ENCODE measurements at regions of chr3 and their contacts with region 1.

Region 1: DNA sequence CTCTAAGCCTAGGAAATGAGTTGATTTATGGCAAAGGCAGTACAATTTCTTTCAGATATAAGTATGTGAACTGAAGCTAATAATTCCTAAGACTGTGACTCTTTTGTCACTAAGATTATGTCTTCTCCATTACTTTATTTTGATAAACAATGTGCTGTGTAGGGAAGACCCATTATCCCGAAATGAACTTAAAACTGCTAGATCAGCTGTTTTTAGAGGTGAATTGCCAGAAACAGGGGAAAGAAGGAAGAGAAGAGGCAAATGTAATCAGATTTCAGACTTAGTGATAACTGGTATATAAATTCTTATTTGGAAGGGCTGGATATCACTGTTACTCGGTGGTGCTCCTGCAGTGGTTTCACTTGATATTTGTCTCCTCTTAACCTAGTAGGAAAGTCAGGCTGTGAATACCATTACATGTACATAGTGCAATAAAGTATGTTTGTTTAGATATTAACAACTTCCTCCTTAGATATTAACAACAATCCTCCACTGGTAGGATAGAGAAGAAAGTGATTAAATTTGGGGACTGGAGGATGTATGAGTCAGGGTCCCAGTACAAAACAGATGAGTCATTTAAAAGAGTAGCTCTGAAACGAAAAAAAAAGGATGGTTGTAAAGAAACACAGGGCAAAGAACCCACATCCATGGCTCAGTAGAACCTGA is 338.5 kb upstream of the KCNH8 start:
- DNase-seq: no peak
- ATAC-seq: no peak
- H3K4me3 ChIP-seq: no peak overlapping the region
- H3K27ac ChIP-seq: no peak overlapping the region
- H3K4me1 ChIP-seq: no peaks in the 10 kb centered on the region
- H3K27me3 ChIP-seq: no peaks in the 10 kb centered on the region
- CTCF ChIP-seq: no peak
- POLR2A ChIP-seq: no peak

Region 2: GRCh38 chr3:18649666-18650363 is 160.0 kb before region 1 on chr3:
- intact Hi-C with region 1: no loop called
- DNase-seq: no peak
- ATAC-seq: no peak
- H3K4me3 ChIP-seq: no peak overlapping the region
- H3K27ac ChIP-seq: no peak overlapping the region
- H3K4me1 ChIP-seq: peaks cover 0 to 4% (median 0%) of the 10 kb centered on the region in 12 donors
- H3K27me3 ChIP-seq: no peaks in the 10 kb centered on the region
- CTCF ChIP-seq: no peak
- POLR2A ChIP-seq: no peak

Region 3: DNA sequence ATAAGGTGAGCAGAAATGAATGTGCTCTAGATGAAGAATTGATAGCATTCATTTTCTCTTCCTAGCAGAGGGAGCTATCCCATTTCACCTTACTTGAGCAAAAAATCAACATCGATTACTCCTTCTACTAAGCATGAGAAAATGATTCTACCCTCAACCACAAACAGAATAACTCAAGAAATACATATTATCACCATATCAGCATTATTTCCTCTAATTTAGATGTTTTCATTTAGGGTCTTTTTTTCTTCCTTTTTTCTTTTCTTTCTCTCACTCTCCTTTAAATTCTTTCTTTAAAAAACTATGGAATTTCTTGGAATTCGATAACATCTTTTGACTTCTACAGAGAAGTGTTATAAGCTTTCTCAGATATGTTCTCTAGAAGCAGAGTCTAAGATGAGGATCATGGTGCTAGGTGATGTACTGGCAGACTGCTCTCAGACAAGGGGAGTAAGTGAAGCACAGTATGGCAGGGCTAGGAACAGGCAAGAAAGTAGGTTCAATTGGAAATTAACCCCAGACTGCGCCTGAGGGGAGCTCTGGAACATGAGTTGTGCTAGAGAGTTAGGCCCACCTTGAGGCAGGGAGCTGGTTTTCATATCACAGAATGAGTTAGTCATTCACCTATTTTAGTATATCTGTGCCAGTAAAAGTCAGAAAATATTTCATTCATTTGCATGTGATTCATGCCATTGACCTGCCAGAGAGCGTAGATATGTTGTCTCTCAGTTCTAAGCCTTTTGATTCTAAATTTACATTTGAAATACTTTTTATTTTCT is 59.3 kb after region 1 on chr3:
- intact Hi-C with region 1: loop called in 1 of 10 experiments (anchors 10 kb)
- DNase-seq: no peak
- ATAC-seq: no peak
- H3K4me3 ChIP-seq: no peak overlapping the region
- H3K27ac ChIP-seq: no peak overlapping the region
- H3K4me1 ChIP-seq: no peaks in the 10 kb centered on the region
- H3K27me3 ChIP-seq: no peaks in the 10 kb centered on the region
- CTCF ChIP-seq: no peak
- POLR2A ChIP-seq: no peak

Measured in heart left ventricle (tissue), 16 donors.